Mammary epithelial cell (primary cell): ENCODE measurements at regions of chr3 and their contacts with region 1.

Region 1: DNA sequence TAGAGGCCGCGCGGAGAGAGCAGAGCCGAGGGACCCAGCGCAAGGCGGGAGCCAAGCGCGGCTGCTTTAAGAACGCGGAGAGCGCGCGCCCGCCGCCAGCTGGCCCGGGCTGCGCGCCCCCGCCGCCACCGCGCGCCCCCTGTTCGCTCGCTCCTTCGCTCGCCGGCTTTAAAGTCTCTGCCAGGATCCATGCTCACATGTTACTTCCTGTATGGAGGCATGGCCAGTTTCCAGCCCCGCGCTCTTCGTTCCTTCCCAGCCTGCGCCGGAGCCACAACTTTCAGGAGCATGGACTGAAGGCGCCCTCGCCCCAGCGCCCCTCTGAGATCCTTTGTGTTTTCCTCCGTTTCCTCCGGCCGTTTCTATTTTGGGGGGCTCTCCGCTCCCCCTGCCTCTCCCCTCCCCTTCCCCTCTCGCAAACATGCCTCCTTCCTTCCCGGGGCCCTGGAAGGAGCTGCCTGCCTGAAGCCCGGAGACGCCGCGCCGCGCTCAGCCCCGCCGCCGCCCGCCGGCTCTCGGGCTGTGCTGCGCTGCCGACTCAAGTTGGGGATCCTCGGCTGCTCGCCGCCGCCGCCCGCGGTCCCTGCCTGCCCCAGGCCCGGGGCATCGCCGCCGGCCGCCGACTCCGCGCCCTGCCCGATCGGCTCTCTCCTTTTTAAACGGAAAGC is at the start of gene PTPRG:
- DNase-seq: peak; percentile 87
- H3K4me3 ChIP-seq: peak within 1 kb of the TSS; percentile 77 to 90 (median 88)
- H3K27ac ChIP-seq: peak within 1 kb of the TSS; percentile 77
- H3K4me1 ChIP-seq: peaks cover 24% of the 10 kb centered on the region
- H3K27me3 ChIP-seq: no peaks in the 10 kb centered on the region
- CTCF ChIP-seq: no peak
- total RNA-seq, gene PTPRG: 10.5 to 31.2 TPM

Region 2: GRCh38 chr3:61530355-61530754 is 31.2 kb before region 1 on chr3:
- CTCF ChIA-PET with region 1: interaction called, 13 read pairs
- dilution Hi-C with region 1: no loop called
- in situ Hi-C with region 1: no loop called
- intact Hi-C with region 1: no loop called
- DNase-seq: peak; percentile 21
- H3K4me3 ChIP-seq: no peak overlapping the region
- H3K27ac ChIP-seq: no peak overlapping the region
- H3K4me1 ChIP-seq: no peaks in the 10 kb centered on the region
- H3K27me3 ChIP-seq: no peaks in the 10 kb centered on the region
- CTCF ChIP-seq: peak; percentile 50 to 66

Region 3: GRCh38 chr3:61704807-61705206 is 143.3 kb after region 1 on chr3:
- CTCF ChIA-PET with region 1: interaction called, 3 read pairs
- dilution Hi-C with region 1: no loop called
- in situ Hi-C with region 1: no loop called
- intact Hi-C with region 1: loop called (anchors 5 kb)
- DNase-seq: peak; percentile 16
- H3K4me3 ChIP-seq: no peak overlapping the region
- H3K27ac ChIP-seq: no peak overlapping the region
- H3K4me1 ChIP-seq: peaks cover 28% of the 10 kb centered on the region
- H3K27me3 ChIP-seq: no peaks in the 10 kb centered on the region
- CTCF ChIP-seq: no peak

Region 4: DNA sequence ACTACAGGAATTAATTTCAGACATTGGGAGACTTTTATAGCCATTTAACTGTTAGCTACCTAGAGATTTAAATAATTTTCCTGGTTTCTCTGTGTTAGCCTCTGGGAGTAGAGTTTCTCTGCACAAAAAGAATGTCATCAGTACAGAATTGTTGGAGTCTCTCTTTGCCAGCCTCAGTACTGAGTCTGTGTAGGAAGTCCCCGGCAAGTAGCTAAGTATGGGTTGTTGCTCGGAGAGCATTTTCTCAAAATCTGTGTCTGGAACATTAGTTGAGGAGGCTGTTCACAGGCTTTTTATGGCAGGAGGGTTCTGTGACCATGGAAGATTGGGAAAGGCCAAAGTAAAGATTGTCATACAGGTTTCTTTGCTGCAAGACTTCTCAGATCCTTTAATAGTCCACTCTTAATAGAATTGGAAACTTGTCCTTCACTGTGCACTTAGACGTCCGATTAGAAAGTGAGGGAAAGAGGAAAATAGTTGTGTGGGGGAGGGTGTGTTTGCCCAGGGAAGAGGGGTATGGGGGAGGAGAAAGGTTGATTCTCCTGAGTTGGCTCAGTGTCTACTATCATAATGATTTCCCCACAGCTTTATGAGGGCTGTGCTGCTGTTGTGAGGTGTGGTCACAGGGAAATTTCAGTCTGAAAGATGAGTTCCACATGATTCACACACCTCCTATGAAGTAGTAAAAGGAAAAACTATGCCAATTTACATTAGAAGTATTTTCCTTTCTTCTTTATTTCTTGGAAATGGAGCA is 207.0 kb after region 1 on chr3:
- CTCF ChIA-PET with region 1: no interaction called
- dilution Hi-C with region 1: no loop called
- in situ Hi-C with region 1: no loop called
- intact Hi-C with region 1: loop called (anchors 2 kb)
- DNase-seq: peak; percentile 54
- H3K4me3 ChIP-seq: no peak overlapping the region
- H3K27ac ChIP-seq: no peak overlapping the region
- H3K4me1 ChIP-seq: no peaks in the 10 kb centered on the region
- H3K27me3 ChIP-seq: no peaks in the 10 kb centered on the region
- CTCF ChIP-seq: no peak

Region 5: GRCh38 chr3:61858056-61858455 is 296.5 kb after region 1 on chr3:
- CTCF ChIA-PET with region 1: no interaction called
- dilution Hi-C with region 1: no loop called
- in situ Hi-C with region 1: no loop called
- intact Hi-C with region 1: loop called (anchors 2 kb)
- DNase-seq: peak; percentile 12
- H3K4me3 ChIP-seq: no peak overlapping the region
- H3K27ac ChIP-seq: no peak overlapping the region
- H3K4me1 ChIP-seq: no peaks in the 10 kb centered on the region
- H3K27me3 ChIP-seq: no peaks in the 10 kb centered on the region
- CTCF ChIP-seq: peak; percentile 10 to 61

Region 6: GRCh38 chr3:61966200-61966599 is 404.7 kb after region 1 on chr3:
- CTCF ChIA-PET with region 1: no interaction called
- dilution Hi-C with region 1: no loop called
- in situ Hi-C with region 1: no loop called
- intact Hi-C with region 1: loop called (anchors 1 kb)
- DNase-seq: peak; percentile 83
- H3K4me3 ChIP-seq: no peak overlapping the region
- H3K27ac ChIP-seq: no peak overlapping the region
- H3K4me1 ChIP-seq: peaks cover 29% of the 10 kb centered on the region
- H3K27me3 ChIP-seq: no peaks in the 10 kb centered on the region
- CTCF ChIP-seq: no peak

Region 7: GRCh38 chr3:62188681-62189383 is 627.3 kb after region 1 on chr3:
- CTCF ChIA-PET with region 1: no interaction called
- dilution Hi-C with region 1: no loop called
- in situ Hi-C with region 1: loop called in 1 of 2 experiments (anchors 25 kb)
- intact Hi-C with region 1: loop called (anchors 2 kb)
- DNase-seq: peak; percentile 45
- H3K4me3 ChIP-seq: no peak overlapping the region
- H3K27ac ChIP-seq: no peak overlapping the region
- H3K4me1 ChIP-seq: no peaks in the 10 kb centered on the region
- H3K27me3 ChIP-seq: no peaks in the 10 kb centered on the region
- CTCF ChIP-seq: peak; percentile 67 to 77